Endothelial cell of umbilical vein (primary cell): ENCODE measurements at regions of chrX and their contacts with region 1.

Region 1: GRCh38 chrX:129905787-129906580 is at the start of gene UTP14A:
- DNase-seq: peak; percentile 88
- H3K4me3 ChIP-seq: peak within 1 kb of the TSS; percentile 69 to 97 (median 96)
- H3K27ac ChIP-seq: peak within 1 kb of the TSS; percentile 64
- H3K4me1 ChIP-seq: peaks cover 6% of the 10 kb centered on the region
- H3K27me3 ChIP-seq: no peaks in the 10 kb centered on the region
- CTCF ChIP-seq: no peak
- POLR2A ChIP-seq: peak; percentile 61
- total RNA-seq, gene UTP14A: 23.5 and 27.7 TPM in 2 replicates

Region 2: DNA sequence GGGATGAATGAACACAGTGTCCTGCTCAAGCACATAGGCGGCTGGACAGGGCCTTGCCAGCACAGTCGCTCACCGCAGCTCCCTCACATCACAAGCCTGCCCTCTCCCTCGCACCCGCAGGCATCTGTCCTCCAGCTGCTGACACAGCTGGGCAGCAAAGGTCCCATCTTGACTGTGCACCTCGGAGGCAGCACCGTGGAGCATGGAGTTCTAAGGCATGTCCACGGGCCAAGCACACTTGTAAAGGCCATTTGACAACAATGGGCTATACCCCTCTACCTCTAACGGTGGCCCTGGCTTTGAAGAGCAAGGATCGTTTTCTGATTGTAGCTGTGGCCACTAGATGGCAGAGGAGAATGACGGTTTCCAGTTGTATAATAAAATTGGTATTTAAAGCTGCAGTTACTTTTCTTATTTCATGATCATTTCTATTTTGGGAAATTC is 305.0 kb before region 1 on chrX:
- CTCF ChIA-PET with region 1: interaction called, 11 read pairs
- POLR2A ChIA-PET with region 1: no interaction called
- dilution Hi-C with region 1: no loop called
- intact Hi-C with region 1: no loop called
- DNase-seq: peak; percentile 21
- H3K4me3 ChIP-seq: no peak overlapping the region
- H3K27ac ChIP-seq: no peak overlapping the region
- H3K4me1 ChIP-seq: peaks cover 7% of the 10 kb centered on the region
- H3K27me3 ChIP-seq: no peaks in the 10 kb centered on the region
- CTCF ChIP-seq: peak; percentile 44 to 51
- POLR2A ChIP-seq: no peak

Region 3: GRCh38 chrX:129843459-129844306 is 62.3 kb before region 1 on chrX and contains the start of gene ZDHHC9:
- CTCF ChIA-PET with region 1: interaction called, 4 read pairs
- POLR2A ChIA-PET with region 1: no interaction called
- dilution Hi-C with region 1: no loop called
- intact Hi-C with region 1: loop called (anchors 2 kb)
- DNase-seq: peak; percentile 88
- H3K4me3 ChIP-seq: peak within 1 kb of the TSS; percentile 64 to 90 (median 69)
- H3K27ac ChIP-seq: peak within 1 kb of the TSS; percentile 59
- H3K4me1 ChIP-seq: peaks cover 4% of the 10 kb centered on the region
- H3K27me3 ChIP-seq: peaks cover 3 to 6% of the 10 kb centered on the region in 2 experiments
- CTCF ChIP-seq: no peak
- POLR2A ChIP-seq: peak; percentile 28
- total RNA-seq, gene ZDHHC9: 33.6 and 38.2 TPM in 2 replicates